ENCODE measurements at regions of chr2 and their contacts with region 1.

Region 1: GRCh38 chr2:84314901-84315330 is 144.2 kb downstream of the SUCLG1 start:
- DNase-seq: peak; percentile 65
- H3K4me3 Mint-ChIP-seq: no peak overlapping the region
- H3K27ac Mint-ChIP-seq: no peak overlapping the region
- H3K4me1 Mint-ChIP-seq: no peaks in the 10 kb centered on the region
- H3K27me3 Mint-ChIP-seq: peaks cover 3% of the 10 kb centered on the region

Region 2: GRCh38 chr2:84022810-84023431 is 292.0 kb before region 1 on chr2:
- intact Hi-C with region 1: loop called (anchors 5 kb)
- DNase-seq: no peak
- H3K4me3 Mint-ChIP-seq: no peak overlapping the region
- H3K27ac Mint-ChIP-seq: no peak overlapping the region
- H3K4me1 Mint-ChIP-seq: no peaks in the 10 kb centered on the region
- H3K27me3 Mint-ChIP-seq: no peaks in the 10 kb centered on the region

Region 3: DNA sequence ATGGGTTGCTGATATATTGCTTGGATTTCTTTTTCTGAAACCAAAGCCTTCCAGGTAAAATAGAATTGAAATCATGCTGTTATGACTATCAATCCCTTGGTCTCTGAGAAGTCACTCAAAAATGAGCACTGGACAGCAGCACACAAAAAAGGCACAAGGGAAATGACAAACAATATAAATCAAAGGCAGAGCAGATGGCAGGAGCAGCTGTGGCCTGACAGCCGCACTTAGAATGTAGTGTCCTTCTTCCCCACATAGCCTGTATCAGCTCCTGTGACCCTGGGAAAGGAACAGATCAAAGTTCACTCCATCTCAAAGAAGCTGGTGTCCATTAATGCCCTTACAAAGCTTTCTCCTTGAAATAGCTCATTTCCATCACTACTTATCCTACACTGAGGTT is 182.5 kb before region 1 on chr2:
- intact Hi-C with region 1: no loop called
- DNase-seq: no peak
- H3K4me3 Mint-ChIP-seq: no peak overlapping the region
- H3K27ac Mint-ChIP-seq: no peak overlapping the region
- H3K4me1 Mint-ChIP-seq: no peaks in the 10 kb centered on the region
- H3K27me3 Mint-ChIP-seq: no peaks in the 10 kb centered on the region

Region 4: DNA sequence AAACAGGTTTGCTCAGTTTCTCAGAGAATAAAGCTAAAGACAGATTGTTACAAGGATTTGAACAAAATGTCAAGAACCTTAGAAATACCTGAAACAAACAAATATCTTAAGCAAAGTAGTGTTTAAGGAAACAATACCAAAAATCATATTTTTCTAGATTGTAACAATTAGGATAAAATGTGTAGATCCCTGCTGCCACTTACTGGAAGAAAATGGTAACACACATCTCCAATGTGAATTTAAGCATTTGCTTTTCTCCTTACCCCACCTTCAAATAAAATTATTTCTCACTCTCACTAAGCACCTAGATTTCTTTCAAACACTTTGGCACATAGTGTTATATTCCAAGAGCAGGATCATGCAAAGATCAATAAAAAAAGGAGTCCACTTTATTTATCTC is 109.2 kb after region 1 on chr2:
- intact Hi-C with region 1: loop called (anchors 10 kb)
- DNase-seq: no peak
- H3K4me3 Mint-ChIP-seq: no peak overlapping the region
- H3K27ac Mint-ChIP-seq: no peak overlapping the region
- H3K4me1 Mint-ChIP-seq: no peaks in the 10 kb centered on the region
- H3K27me3 Mint-ChIP-seq: no peaks in the 10 kb centered on the region